MCF 10A (cell line): ENCODE measurements at regions of chr5 and their contacts with region 1.

Region 1: GRCh38 chr5:147576646-147577535 is 67.0 kb upstream of the DPYSL3 start:
- DNase-seq: peak; percentile 68
- H3K4me3 Mint-ChIP-seq: no peak overlapping the region
- H3K27ac Mint-ChIP-seq: no peak overlapping the region
- H3K4me1 Mint-ChIP-seq: no peaks in the 10 kb centered on the region
- H3K27me3 Mint-ChIP-seq: no peaks in the 10 kb centered on the region
- CTCF ChIP-seq: peak; percentile 99

Region 2: DNA sequence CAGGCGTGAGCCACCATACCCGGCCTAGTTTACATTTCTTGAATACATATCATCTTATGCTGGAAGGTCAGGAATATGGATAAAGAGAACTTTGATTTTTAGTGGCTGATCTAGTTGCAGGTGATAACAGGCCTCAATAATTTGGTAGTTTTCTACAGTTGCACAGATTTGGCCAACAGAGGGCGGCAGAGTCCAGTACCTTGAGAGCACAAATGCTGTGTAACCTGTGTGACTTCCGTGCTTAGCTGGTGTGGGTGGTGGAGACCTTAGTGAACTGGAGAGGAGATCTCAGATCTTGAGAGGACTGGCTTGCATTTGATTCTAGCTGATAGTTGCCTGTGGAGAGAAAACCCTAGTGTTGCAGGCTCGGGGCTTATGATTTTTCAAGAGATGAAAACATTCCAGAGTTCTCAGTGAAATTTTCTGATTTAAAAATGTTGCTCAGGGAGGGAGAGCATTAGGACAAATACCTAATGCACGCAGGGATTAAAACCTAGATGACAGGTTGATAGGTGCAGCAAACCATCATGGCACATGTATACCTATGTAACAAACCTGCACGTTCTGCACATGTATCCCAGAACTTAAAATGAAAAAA is 1043.5 kb before region 1 on chr5:
- CTCF ChIA-PET with region 1: interaction called, 4 read pairs
- POLR2A ChIA-PET with region 1: no interaction called
- intact Hi-C with region 1: loop called (anchors 5 kb)
- DNase-seq: peak; percentile 90
- H3K4me3 Mint-ChIP-seq: no peak overlapping the region
- H3K27ac Mint-ChIP-seq: no peak overlapping the region
- H3K4me1 Mint-ChIP-seq: peaks cover 8% of the 10 kb centered on the region
- H3K27me3 Mint-ChIP-seq: no peaks in the 10 kb centered on the region
- CTCF ChIP-seq: peak; percentile 96

Region 3: GRCh38 chr5:147169399-147169798 is 407.5 kb before region 1 on chr5:
- CTCF ChIA-PET with region 1: no interaction called
- POLR2A ChIA-PET with region 1: no interaction called
- intact Hi-C with region 1: no loop called
- DNase-seq: peak; percentile 29
- H3K4me3 Mint-ChIP-seq: no peak overlapping the region
- H3K27ac Mint-ChIP-seq: no peak overlapping the region
- H3K4me1 Mint-ChIP-seq: no peaks in the 10 kb centered on the region
- H3K27me3 Mint-ChIP-seq: peaks cover under 1% of the 10 kb centered on the region
- CTCF ChIP-seq: no peak

Region 4: DNA sequence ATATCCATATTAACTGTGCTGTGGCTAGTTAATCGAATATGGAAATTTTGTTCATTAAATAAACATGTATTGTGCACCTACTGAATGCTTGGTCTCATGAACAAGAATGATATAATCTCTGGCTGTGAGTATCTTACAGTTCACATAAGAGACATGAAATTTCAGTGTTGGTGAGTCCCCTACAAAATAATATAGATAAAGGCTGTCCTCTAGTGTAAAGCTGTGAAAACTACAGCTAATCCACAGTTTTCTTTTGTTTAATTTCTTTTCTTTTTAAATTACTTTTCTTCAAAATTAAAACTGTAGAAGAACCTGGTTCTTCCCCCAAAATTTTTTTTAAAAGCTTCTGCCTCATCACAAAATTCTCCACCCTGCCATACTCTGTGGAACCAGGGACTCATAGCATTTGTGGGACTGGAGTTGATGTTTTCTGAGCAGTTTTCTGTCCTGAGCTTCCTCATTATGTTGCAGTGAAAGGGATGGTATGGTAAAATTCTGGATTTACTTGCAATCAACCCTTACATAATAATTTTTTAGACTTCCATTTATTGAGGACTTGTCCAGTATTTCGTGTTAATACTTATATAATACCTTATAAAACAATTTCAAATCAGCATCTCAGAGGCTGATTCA is 207.0 kb before region 1 on chr5:
- CTCF ChIA-PET with region 1: interaction called, 17 read pairs
- POLR2A ChIA-PET with region 1: no interaction called
- intact Hi-C with region 1: loop called (anchors 2 kb)
- DNase-seq: peak; percentile 36
- H3K4me3 Mint-ChIP-seq: no peak overlapping the region
- H3K27ac Mint-ChIP-seq: no peak overlapping the region
- H3K4me1 Mint-ChIP-seq: no peaks in the 10 kb centered on the region
- H3K27me3 Mint-ChIP-seq: no peaks in the 10 kb centered on the region
- CTCF ChIP-seq: peak; percentile 88

Region 5: GRCh38 chr5:147446523-147446922 is 130.4 kb before region 1 on chr5:
- CTCF ChIA-PET with region 1: interaction called, 210 read pairs
- POLR2A ChIA-PET with region 1: no interaction called
- intact Hi-C with region 1: no loop called
- DNase-seq: no peak
- H3K4me3 Mint-ChIP-seq: no peak overlapping the region
- H3K27ac Mint-ChIP-seq: no peak overlapping the region
- H3K4me1 Mint-ChIP-seq: no peaks in the 10 kb centered on the region
- H3K27me3 Mint-ChIP-seq: peaks cover 6% of the 10 kb centered on the region
- CTCF ChIP-seq: no peak

Region 6: DNA sequence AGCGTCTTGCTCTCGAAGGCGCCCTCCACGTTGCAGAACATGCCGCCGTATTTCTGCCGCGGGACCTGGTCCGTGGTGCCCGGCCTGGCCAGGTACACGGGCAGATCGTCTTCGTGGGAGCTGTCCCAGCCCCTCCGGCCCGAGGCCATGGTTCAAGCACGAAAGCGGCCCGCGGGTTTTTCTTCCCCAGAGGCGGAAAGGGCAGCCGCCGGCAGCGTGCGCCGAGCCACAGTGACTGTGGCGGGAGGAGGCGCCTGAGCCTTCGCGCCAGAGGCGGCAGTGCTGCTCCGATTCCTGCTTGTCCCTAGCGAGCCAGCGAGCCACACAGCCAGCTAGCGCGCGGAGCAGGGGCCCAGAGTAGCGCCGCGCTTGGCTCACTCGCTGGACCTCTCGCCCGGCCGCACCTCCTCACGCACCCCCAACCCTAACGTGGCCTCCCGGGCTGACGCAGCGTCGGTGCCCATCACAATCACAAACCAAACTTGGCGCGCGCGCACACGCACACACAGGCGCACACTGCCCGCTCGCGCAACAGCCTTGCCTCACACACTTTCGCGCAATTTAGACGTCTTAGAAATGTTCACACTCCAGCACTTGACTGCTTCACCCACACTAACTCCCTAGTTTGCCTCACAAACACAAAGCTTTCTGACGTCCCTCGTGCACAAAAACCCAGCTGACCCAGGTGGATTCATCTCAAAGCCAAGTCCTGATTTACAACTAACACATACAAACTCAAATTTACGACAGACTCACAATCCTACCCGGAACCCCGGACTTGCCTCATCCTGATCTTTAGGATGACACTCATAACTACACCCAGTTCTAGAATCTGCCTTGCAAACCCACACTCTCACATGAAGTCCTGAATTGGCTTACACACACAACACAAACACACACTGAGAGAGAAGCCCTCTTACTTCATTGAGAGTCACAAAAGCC is 66.9 kb before region 1 on chr5 and contains the start of gene DPYSL3:
- CTCF ChIA-PET with region 1: interaction called, 15 read pairs
- POLR2A ChIA-PET with region 1: no interaction called
- intact Hi-C with region 1: loop called (anchors 2 kb)
- DNase-seq: peak; percentile 69
- H3K4me3 Mint-ChIP-seq: peak within 1 kb of the TSS; percentile 73
- H3K27ac Mint-ChIP-seq: peak within 1 kb of the TSS; percentile 21
- H3K4me1 Mint-ChIP-seq: peaks cover 14% of the 10 kb centered on the region
- H3K27me3 Mint-ChIP-seq: peaks cover 32% of the 10 kb centered on the region
- CTCF ChIP-seq: peak; percentile 25
- total RNA-seq, gene DPYSL3: 8.2 and 8.9 TPM in 2 replicates

Region 7: GRCh38 chr5:147539053-147539452 is 37.8 kb before region 1 on chr5:
- CTCF ChIA-PET with region 1: interaction called, 30 read pairs
- POLR2A ChIA-PET with region 1: interaction called, 4 read pairs
- intact Hi-C with region 1: no loop called
- DNase-seq: peak; percentile 61
- H3K4me3 Mint-ChIP-seq: no peak overlapping the region
- H3K27ac Mint-ChIP-seq: no peak overlapping the region
- H3K4me1 Mint-ChIP-seq: peaks cover 37% of the 10 kb centered on the region
- H3K27me3 Mint-ChIP-seq: no peaks in the 10 kb centered on the region
- CTCF ChIP-seq: no peak

Region 8: DNA sequence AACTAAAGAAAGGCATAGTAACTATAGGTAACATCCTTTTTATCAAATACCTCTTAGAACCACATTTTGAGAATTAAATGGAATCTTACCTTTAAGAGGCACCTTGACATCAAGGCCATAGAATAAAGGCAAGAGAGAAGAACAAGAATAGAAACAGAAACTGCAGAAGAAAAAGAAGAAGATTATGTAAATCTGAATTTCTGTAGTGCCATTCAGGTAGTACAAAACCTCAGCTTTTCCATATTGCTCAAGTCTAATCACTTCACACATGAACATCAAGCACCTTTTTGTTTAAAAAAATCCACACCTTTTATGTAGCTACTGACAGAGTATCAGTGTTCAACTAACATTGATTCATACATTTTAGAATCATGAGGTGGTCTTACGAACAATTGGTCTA is 24.8 kb after region 1 on chr5:
- CTCF ChIA-PET with region 1: interaction called, 20 read pairs
- POLR2A ChIA-PET with region 1: interaction called, 3 read pairs
- intact Hi-C with region 1: no loop called
- DNase-seq: no peak
- H3K4me3 Mint-ChIP-seq: no peak overlapping the region
- H3K27ac Mint-ChIP-seq: no peak overlapping the region
- H3K4me1 Mint-ChIP-seq: no peaks in the 10 kb centered on the region
- H3K27me3 Mint-ChIP-seq: peaks cover 19% of the 10 kb centered on the region
- CTCF ChIP-seq: no peak

Region 9: DNA sequence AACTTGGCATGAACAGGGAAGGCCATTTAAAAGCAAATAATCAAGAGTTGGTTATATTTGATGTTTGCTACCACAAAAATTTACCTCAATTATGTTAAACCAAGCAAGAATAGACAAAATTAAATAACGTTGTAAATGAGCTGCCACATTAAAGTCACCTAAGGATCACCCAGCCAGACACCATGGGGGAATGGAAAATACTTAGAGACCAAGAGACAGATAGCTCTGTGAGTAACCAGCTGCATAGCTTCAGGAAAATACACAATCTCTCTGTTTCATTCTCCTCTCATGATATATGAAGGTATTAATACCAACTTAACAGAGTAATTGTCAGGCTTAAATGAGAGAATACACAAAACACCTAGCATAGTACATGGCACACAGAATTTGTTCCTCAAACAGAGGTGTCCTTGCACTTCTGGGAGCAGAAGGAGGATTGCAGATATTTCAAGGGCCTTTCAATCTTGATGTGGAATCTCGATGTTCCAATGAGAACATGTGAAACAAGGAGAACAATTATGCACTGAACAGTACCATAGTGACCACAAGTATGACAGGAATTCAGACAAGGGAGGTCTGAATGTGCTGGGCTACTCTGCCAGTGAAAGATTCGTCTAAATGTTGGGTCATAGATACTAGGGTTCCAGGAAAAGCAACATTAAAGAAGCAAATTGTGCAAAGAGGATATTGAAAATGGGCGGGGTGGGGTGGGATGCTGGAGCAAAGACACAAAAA is 187.1 kb after region 1 on chr5:
- CTCF ChIA-PET with region 1: no interaction called
- POLR2A ChIA-PET with region 1: no interaction called
- intact Hi-C with region 1: no loop called
- DNase-seq: peak; percentile 49
- H3K4me3 Mint-ChIP-seq: no peak overlapping the region
- H3K27ac Mint-ChIP-seq: no peak overlapping the region
- H3K4me1 Mint-ChIP-seq: peaks cover 14% of the 10 kb centered on the region
- H3K27me3 Mint-ChIP-seq: peaks cover 43% of the 10 kb centered on the region
- CTCF ChIP-seq: no peak